Breast epithelium (tissue), 4 donors: ENCODE measurements at regions of chr14 and their contacts with region 1.

Region 1: GRCh38 chr14:82755923-82756322 is 1222.3 kb upstream of the SEL1L start:
- DNase-seq: no peak
- H3K4me3 ChIP-seq: no peak overlapping the region
- H3K27ac ChIP-seq: no peak overlapping the region
- H3K4me1 ChIP-seq: no peaks in the 10 kb centered on the region
- H3K27me3 ChIP-seq: no peaks in the 10 kb centered on the region
- CTCF ChIP-seq: no peak
- POLR2A ChIP-seq: no peak

Region 2: GRCh38 chr14:82565825-82566224 is 190.1 kb before region 1 on chr14:
- intact Hi-C with region 1: loop called (anchors 5 kb)
- DNase-seq: no peak
- H3K4me3 ChIP-seq: no peak overlapping the region
- H3K27ac ChIP-seq: no peak overlapping the region
- H3K4me1 ChIP-seq: no peaks in the 10 kb centered on the region
- H3K27me3 ChIP-seq: no peaks in the 10 kb centered on the region
- CTCF ChIP-seq: no peak
- POLR2A ChIP-seq: no peak

Region 3: DNA sequence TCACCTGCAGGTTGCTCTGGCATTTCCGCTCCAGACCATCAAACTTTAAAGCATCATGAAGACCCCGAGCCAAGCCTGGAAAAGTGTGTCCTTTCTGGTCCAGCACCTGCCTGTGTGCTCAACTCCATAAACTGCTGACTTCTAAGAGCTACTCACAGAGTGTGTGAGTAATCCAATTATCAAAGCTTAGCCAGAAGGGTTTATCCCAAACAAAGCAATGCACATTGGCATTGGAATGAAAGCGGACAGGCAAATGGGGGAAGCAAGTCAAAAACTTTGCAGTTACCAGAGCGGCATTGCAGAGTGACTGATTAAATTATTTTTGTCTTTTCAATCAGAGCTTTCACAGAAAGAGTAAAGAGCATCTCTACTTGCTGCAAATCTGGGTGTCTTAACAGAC is 40.2 kb after region 1 on chr14:
- intact Hi-C with region 1: loop called (anchors 2 kb)
- DNase-seq: no peak
- H3K4me3 ChIP-seq: no peak overlapping the region
- H3K27ac ChIP-seq: no peak overlapping the region
- H3K4me1 ChIP-seq: no peaks in the 10 kb centered on the region
- H3K27me3 ChIP-seq: no peaks in the 10 kb centered on the region
- CTCF ChIP-seq: no peak
- POLR2A ChIP-seq: no peak